PC-9 (cell line): ENCODE measurements at regions of chr6 and their contacts with region 1.

Region 1: GRCh38 chr6:28606424-28607400 is 81.0 kb downstream of the GPX5 start:
- DNase-seq: peak; percentile 55 to 62
- H3K4me3 ChIP-seq: peak overlapping the region; percentile 65
- H3K27ac ChIP-seq: 0 out of 2 replicates have a peak overlapping the region, but pooled peaks have one; percentile 5
- H3K4me1 ChIP-seq: peaks cover 10% of the 10 kb centered on the region; the same call in 1 of the 2 replicates
- H3K27me3 ChIP-seq: no peaks in the 10 kb centered on the region
- CTCF ChIP-seq: peak; percentile 68

Region 2: GRCh38 chr6:28269492-28269891 is 337.2 kb before region 1 on chr6:
- CTCF ChIA-PET with region 1: no interaction called
- POLR2A ChIA-PET with region 1: no interaction called
- intact Hi-C with region 1: no loop called
- DNase-seq: peak in 1 of 2 experiments; percentile 60
- H3K4me3 ChIP-seq: no peak overlapping the region
- H3K27ac ChIP-seq: no peak overlapping the region
- H3K4me1 ChIP-seq: peaks cover 28% of the 10 kb centered on the region
- H3K27me3 ChIP-seq: no peaks in the 10 kb centered on the region
- CTCF ChIP-seq: no peak

Region 3: DNA sequence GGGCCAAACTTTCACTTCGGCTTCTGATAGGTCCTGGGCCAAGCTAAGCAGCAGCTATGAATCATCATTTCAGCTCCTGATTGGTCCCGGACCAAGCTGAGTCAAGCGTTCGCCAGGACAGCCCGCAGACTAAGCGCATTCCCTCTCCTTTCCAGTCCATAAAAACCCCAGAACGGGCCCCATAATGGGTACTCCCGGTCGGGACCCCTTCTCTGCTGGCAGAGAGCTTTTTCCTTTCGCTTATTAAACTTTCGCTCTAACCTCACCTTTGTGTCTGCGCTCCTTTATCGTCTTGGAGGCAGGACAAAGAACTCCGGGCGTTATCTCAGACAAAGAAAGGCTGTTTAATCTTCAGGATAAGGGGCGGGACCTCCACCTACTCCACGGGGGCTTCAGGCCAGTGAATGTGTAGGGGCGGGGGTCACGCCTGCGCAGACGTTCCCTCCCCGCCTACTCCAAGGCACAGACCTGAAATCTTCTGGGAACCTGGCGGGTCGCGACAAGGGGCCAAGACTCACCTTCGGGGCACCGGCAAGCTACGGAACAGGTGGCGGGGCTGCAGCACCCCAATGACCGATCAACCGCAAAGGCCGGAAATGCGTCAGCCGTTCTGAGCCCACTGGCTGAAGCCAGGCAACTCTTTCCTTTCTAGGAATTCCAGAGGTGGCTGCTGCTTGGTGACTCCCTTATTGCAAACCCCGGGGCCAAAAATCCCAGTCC is 271.0 kb before region 1 on chr6 and contains the start of gene ZSCAN31:
- CTCF ChIA-PET with region 1: no interaction called
- POLR2A ChIA-PET with region 1: no interaction called
- intact Hi-C with region 1: no loop called
- DNase-seq: peak; percentile 75 to 77
- H3K4me3 ChIP-seq: peak within 1 kb of the TSS; percentile 49
- H3K27ac ChIP-seq: peak within 1 kb of the TSS; percentile 69
- H3K4me1 ChIP-seq: peaks cover 7% of the 10 kb centered on the region; the same call in 1 of the 2 replicates
- H3K27me3 ChIP-seq: no peaks in the 10 kb centered on the region
- CTCF ChIP-seq: no peak
- total RNA-seq, gene ZSCAN31: 64.0 and 88.8 TPM in 2 replicates

Region 4: GRCh38 chr6:28657769-28658465 is 51.2 kb after region 1 on chr6:
- CTCF ChIA-PET with region 1: no interaction called
- POLR2A ChIA-PET with region 1: interaction called, 9 read pairs
- intact Hi-C with region 1: loop called (anchors 1 kb)
- DNase-seq: peak; percentile 49 to 60
- H3K4me3 ChIP-seq: peak overlapping the region; percentile 88
- H3K27ac ChIP-seq: no peak overlapping the region
- H3K4me1 ChIP-seq: peaks cover 17% of the 10 kb centered on the region
- H3K27me3 ChIP-seq: no peaks in the 10 kb centered on the region
- CTCF ChIP-seq: no peak

Region 5: DNA sequence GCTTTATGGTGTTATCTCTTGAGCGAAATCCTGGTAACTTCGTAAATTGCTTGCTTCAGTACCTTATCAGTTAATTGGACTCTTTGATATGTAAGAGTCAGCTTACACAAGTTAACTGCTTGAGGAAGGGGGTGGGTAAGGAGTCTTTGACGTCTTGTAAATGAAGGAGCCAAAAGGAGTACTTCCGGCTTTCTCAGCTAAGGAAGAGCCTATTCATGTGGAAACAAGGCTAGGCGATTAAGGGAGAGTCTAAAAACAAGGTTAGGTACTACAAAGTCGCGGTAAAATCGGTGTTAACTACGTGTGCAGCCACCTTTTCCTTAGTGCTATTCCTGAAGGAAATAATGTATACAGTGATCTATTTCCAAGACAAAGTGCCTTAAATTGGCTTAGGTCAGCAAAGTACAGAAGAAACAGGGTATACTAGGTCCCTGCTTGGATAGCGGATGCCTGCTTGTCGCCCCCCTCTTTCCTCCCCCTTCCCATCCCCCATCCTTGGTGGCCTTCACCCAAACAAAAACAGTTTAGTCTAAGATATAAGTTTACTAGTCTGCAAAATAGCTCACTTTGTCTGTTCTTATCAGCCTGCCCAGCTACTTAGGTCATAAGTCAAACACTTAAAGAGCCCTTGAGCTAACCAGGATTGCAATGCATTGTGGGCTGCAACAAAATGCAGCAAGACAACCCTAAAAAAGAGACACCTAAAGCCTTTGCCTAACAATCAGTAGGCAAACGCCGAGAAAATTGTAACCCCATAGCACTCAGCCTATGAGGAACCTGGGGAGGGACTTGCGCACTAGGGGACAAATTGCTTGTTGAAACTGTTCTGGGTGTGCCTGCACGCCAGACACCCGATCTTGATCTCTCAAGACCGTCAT is 169.8 kb after region 1 on chr6:
- CTCF ChIA-PET with region 1: no interaction called
- POLR2A ChIA-PET with region 1: no interaction called
- intact Hi-C with region 1: no loop called
- DNase-seq: no peak
- H3K4me3 ChIP-seq: no peak overlapping the region
- H3K27ac ChIP-seq: no peak overlapping the region
- H3K4me1 ChIP-seq: no peaks in the 10 kb centered on the region
- H3K27me3 ChIP-seq: peaks cover 36% of the 10 kb centered on the region; the same call in 1 of the 2 replicates
- CTCF ChIP-seq: no peak